GM23248 (cell line): ENCODE measurements at regions of chr6 and their contacts with region 1.

Region 1: DNA sequence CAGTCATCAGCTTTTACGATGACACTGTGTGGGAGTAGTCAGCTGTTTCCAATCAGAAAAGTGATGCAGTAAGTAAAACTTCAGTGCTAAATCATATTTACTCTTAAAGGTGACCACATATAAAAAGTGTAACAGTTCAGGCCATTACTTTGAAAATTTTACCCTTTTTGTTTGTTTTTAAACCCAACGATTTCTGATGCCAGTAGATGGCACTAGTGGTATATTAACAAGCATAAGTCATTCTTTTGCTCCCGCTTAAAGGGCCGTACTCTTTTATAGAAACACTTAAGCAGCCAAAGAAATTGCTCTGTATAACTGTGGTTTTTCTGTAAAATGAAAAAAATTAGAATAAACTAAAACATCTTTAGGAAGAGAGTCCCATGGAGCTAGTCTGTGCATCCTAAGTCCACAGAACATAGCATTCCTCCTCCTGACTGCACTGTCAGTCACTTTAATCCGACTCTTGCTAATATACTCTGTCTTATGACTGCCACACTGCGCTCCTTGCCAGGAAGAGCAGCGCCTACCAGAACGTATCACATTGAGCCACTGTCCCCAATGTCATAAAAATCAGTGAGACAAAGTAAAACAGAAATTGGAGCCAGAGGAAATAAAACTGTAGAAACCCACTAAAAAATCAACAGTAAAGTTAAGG is 25.0 kb downstream of the HEBP2 start:
- DNase-seq: peak; percentile 81
- H3K4me3 ChIP-seq: no peak overlapping the region
- H3K27ac ChIP-seq: no peak overlapping the region
- H3K4me1 ChIP-seq: no peaks in the 10 kb centered on the region
- H3K27me3 ChIP-seq: no peaks in the 10 kb centered on the region

Region 2: GRCh38 chr6:138509371-138509770 is 80.3 kb after region 1 on chr6:
- in situ Hi-C with region 1: loop called (anchors 5 kb)
- DNase-seq: peak; percentile 61
- H3K4me3 ChIP-seq: no peak overlapping the region
- H3K27ac ChIP-seq: no peak overlapping the region
- H3K4me1 ChIP-seq: no peaks in the 10 kb centered on the region
- H3K27me3 ChIP-seq: no peaks in the 10 kb centered on the region

Region 3: DNA sequence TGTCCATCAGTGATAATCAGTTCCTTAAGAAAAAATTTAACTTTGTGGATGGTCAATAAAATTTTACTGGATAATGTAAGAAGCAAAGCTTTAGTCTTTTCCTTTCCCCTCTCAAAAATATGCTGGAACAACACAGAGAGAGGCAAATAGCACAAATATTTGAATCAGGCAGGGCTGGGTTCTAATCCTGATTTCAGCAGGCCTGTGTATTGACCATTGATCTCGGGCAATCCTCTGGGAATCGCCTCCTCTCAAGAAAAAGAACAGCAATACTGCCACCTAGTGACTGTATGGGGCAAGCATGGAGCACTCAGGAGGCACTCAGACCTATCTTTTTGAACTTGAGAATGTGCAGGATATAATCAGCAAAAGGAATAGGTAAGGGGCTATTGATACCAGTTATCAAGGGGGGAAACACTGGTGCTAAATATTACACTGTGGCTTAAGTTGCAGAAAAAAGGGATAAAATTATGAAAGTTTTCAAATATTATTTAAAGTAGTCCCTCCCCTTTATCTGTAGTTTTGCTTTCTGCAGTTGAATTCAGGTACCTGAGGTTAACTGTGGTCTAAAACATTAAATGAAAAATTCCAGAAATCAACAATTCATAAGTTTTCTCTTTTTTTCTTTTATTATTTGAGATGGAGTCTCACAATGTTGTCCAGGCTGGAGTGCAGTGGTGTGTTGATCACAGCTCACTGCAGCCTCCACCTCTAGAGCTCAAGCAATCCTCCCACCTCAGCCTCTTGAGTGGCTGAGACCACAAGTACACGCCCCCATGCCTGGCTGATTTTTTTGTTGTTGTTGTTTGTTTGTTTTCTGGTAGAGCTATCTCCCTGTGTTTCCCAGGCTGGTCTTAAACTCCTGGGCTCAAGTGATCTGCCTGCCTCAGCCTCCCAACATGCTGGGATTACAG is 162.0 kb after region 1 on chr6:
- in situ Hi-C with region 1: loop called (anchors 10 kb)
- DNase-seq: peak; percentile 80
- H3K4me3 ChIP-seq: no peak overlapping the region
- H3K27ac ChIP-seq: no peak overlapping the region
- H3K4me1 ChIP-seq: peaks cover 19% of the 10 kb centered on the region
- H3K27me3 ChIP-seq: no peaks in the 10 kb centered on the region

Region 4: GRCh38 chr6:138773177-138774091 is 344.4 kb after region 1 on chr6 and contains the start of gene CCDC28A:
- in situ Hi-C with region 1: loop called (anchors 25 kb)
- DNase-seq: peak; percentile 99
- H3K4me3 ChIP-seq: peak within 1 kb of the TSS; percentile 87
- H3K27ac ChIP-seq: peak within 1 kb of the TSS; percentile 78
- H3K4me1 ChIP-seq: peaks cover 16% of the 10 kb centered on the region; the same call in 1 of the 2 replicates
- H3K27me3 ChIP-seq: no peaks in the 10 kb centered on the region
- total RNA-seq, gene CCDC28A: 10.4 and 18.2 TPM in 2 replicates